ENCODE measurements at regions of chr6 and their contacts with region 1.

Region 1: DNA sequence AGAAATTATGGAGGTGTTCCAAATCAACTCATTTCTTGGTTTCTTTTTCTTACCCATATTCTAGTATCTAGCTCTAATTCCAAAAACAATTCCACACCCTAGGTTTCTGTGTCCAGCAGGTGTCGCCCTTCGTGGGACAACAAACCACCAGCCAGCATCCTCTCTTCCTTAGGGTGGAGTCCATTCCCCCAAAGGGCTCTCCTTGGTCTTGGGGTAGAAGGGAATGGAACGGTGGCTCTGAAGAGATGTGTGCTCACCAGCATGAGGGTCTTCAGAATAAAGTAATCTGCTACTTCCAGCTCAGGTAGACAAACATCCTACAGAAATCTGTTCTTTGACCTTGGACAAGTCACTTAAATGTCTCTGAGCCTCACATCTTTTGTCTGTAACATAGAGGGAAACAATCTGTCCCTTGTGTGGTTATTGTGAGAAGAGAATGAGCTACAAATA is 7.2 kb downstream of the HLA-DMB start:
- DNase-seq: peak; percentile 86
- H3K4me3 Mint-ChIP-seq: no peak overlapping the region
- H3K27ac Mint-ChIP-seq: no peak overlapping the region
- H3K4me1 Mint-ChIP-seq: peaks cover 13% of the 10 kb centered on the region
- H3K27me3 Mint-ChIP-seq: peaks cover 20% of the 10 kb centered on the region

Region 2: GRCh38 chr6:32885698-32886286 is 47.9 kb before region 1 on chr6:
- CTCF ChIA-PET with region 1: interaction called, 10 read pairs
- DNase-seq: no peak
- H3K4me3 Mint-ChIP-seq: no peak overlapping the region
- H3K27ac Mint-ChIP-seq: no peak overlapping the region
- H3K4me1 Mint-ChIP-seq: no peaks in the 10 kb centered on the region
- H3K27me3 Mint-ChIP-seq: peaks cover 23% of the 10 kb centered on the region

Region 3: GRCh38 chr6:32894080-32895005 is 39.3 kb before region 1 on chr6:
- CTCF ChIA-PET with region 1: interaction called, 16 read pairs
- DNase-seq: peak; percentile 96
- H3K4me3 Mint-ChIP-seq: peak overlapping the region; percentile 99
- H3K27ac Mint-ChIP-seq: peak overlapping the region; percentile 91
- H3K4me1 Mint-ChIP-seq: peaks cover 46% of the 10 kb centered on the region
- H3K27me3 Mint-ChIP-seq: peaks cover 12% of the 10 kb centered on the region

Region 4: GRCh38 chr6:32912951-32913350 is 20.7 kb before region 1 on chr6:
- CTCF ChIA-PET with region 1: interaction called, 11 read pairs
- DNase-seq: no peak
- H3K4me3 Mint-ChIP-seq: no peak overlapping the region
- H3K27ac Mint-ChIP-seq: no peak overlapping the region
- H3K4me1 Mint-ChIP-seq: no peaks in the 10 kb centered on the region
- H3K27me3 Mint-ChIP-seq: peaks cover 49% of the 10 kb centered on the region

Region 5: DNA sequence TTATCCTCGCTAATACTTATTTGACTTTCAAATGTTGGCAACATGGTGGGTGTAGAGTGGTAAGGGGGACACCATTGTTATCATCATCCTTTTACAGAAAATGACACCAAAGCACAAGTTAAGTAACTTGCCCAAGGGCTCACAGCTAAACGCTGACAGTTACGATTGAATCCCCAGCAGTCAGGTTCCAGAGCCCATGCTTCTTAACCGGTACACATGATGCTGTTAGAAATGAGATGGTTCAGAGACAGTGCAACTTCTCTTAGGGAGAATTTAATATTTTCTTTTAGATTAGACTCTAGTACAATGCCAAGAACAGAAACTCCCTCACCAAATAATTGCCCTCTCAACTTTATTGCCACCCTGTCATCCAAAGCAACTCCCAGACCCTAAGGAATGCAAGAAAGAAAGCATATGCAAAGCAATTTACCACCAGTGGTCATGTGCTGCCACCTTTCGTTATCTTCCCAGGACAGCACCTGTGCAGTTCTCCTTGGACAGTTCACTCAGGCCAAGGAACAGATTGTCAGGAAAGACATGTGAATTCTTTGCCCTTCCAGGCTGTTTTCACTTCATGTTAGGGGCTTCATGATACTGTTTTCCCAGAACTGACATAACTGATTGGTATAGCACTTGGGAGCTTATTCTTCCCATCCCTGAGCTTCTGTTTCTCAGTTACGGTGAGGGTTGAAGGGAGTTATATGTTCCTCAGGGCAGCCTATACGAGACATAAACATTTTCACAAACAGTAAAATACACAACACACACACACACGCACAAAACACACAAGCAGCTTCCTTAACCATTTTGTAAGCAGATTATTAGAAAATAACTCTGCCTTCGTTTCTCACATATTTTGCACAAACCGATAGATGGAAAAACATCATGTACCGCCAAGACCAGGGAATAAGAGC is 14.1 kb after region 1 on chr6:
- CTCF ChIA-PET with region 1: interaction called, 160 read pairs
- DNase-seq: peak; percentile 64
- H3K4me3 Mint-ChIP-seq: no peak overlapping the region
- H3K27ac Mint-ChIP-seq: no peak overlapping the region
- H3K4me1 Mint-ChIP-seq: peaks cover 69% of the 10 kb centered on the region
- H3K27me3 Mint-ChIP-seq: no peaks in the 10 kb centered on the region

Region 6: DNA sequence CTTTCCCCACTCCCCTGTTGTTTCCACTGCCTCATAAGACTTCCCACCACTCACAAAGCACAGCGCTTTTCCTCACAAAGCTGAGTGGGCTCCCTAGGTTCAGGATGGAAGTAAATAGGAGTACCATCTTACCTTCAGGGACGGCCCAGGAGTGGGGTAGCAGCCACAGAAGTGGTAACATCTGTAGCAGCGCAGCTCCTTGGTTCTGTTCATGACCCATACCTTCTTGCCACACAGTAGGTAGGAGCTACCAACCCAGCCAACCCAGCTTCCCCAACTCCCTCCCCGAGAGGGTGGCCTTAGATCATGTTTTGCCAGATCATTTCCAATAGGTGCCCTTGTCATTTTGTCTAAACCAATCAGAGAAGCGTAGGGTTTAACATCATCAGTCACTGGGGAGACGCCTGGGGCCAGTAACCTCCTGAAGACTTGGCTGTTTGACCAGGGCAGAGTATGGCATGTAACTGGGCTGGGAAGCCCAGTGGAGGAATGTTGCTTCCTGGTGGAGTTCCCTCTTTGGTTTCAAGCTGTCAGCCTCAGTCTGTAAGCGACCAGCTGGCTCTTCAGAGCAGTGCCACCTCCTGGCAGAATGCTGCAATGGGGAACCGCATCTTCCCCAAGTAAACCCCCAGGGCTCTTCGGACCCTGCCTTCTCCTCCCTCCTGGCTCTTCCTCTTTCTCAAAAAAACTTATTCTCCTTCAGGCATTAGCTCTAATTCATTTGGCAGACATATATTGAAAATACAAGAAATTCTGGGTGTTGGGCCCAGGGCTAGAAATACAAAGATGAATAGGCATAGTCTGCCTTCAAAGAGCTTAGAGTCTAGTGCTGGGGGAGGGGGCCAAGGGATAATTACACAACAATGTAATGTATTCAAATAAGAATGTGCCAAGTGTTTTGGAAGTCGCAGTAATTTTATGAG is 19.4 kb after region 1 on chr6 and contains the start of gene HLA-DMA:
- CTCF ChIA-PET with region 1: interaction called, 160 read pairs
- DNase-seq: peak; percentile 86
- H3K4me3 Mint-ChIP-seq: peak within 1 kb of the TSS; percentile 68
- H3K27ac Mint-ChIP-seq: peak within 1 kb of the TSS; percentile 75
- H3K4me1 Mint-ChIP-seq: peaks cover 52% of the 10 kb centered on the region
- H3K27me3 Mint-ChIP-seq: no peaks in the 10 kb centered on the region

Region 7: DNA sequence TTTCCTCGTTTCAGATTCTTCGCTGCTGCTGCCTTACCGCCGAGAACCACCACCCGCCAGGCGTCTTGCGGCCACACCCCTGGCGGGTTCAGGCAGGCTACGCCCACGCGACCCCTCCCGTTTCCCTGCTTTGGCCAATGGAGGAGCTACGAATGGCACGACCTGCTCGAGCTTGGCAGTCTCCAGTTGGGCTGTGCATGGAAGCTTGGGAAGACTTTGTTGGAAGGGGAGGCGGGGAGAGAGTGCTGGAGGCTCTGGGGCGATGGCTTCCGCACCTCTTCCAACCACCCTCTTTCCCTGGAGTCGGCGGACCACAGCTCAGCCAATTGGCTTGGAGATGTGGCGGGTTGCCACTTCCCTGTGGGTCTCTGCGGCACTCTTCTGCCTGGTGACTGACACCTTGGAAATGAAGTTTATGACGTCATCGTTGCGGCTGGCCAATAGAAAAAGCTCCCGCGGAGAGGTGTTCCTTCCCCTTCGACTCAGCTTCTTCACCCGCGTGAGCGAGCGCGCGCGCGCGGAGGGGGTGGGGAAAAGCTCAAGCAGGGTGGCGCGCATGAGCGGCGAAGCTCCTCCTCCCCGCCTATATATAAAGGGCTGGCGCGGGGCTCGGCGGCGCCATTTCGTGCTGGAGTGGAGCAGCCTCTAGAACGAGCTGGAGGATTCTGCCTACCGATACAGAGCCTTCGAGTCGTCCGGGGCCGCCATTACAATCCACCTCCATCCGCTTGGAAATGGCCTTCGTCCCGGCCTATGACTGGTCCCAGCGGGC is 38.1 kb after region 1 on chr6:
- CTCF ChIA-PET with region 1: interaction called, 44 read pairs
- DNase-seq: peak; percentile 99
- H3K4me3 Mint-ChIP-seq: peak overlapping the region; percentile 85
- H3K27ac Mint-ChIP-seq: peak overlapping the region; percentile 97
- H3K4me1 Mint-ChIP-seq: peaks cover 25% of the 10 kb centered on the region
- H3K27me3 Mint-ChIP-seq: peaks cover 10% of the 10 kb centered on the region

Region 8: DNA sequence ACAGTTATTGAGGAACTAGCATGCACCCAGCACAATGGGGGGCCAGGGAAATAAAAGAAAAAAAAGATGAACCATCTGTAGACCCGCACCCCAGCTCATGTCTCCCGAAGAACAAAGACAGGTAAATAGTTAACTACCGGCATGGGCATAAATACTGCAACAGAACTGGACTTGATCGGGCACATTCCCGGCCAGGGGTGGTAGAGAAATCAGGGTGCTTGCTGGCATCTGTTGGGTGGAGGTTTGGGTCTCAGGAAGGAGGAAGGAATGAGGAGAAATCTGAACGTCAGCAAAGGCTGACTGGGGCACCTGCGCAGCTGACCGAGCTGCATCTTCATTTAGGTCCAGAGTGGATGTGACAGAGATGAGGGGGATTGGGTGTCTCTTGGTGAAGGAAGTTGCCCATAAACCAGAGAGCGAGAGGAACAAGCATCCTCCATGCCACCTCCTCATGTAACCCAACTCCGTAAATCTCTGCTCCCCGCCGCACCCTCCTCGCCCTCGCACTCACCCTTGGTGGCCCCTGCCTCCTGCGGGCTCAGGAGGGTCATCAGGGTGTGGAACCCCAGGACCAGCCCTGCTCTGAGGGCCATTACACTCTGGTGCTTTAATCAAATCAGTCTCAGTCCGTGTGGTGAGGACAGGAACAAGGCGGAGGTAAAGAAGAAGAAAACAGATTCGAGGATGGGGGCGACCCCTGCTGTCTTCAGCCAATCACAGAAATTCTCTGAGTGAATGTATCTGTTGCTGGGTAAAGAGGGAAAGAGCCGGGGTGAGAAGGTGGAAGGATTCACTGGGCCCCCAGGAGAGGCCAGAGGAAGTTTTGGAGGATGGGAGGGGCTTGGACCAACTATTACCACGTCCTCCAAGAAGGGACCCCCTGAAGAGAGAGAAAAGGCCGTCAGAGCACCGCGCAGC is 75.5 kb after region 1 on chr6 and contains the start of gene HLA-DOA:
- CTCF ChIA-PET with region 1: no interaction called
- DNase-seq: peak; percentile 46
- H3K4me3 Mint-ChIP-seq: peak within 1 kb of the TSS; percentile 8
- H3K27ac Mint-ChIP-seq: no peak within 1 kb of the TSS
- H3K4me1 Mint-ChIP-seq: peaks cover 11% of the 10 kb centered on the region
- H3K27me3 Mint-ChIP-seq: peaks cover 59% of the 10 kb centered on the region

Region 9: GRCh38 chr6:33197431-33198048 is 263.9 kb after region 1 on chr6:
- CTCF ChIA-PET with region 1: no interaction called
- DNase-seq: peak; percentile 49
- H3K4me3 Mint-ChIP-seq: peak overlapping the region; percentile 98
- H3K27ac Mint-ChIP-seq: peak overlapping the region; percentile 56
- H3K4me1 Mint-ChIP-seq: peaks cover 54% of the 10 kb centered on the region
- H3K27me3 Mint-ChIP-seq: peaks cover 13% of the 10 kb centered on the region

Measured in activated naive CD4-positive, alpha-beta T cell treated with anti-CD3 and anti-CD28 coated beads, Interleukin-2, amount 10 ng/mL, durations not matched to agents 7 days and 5 days (primary cell).